Mammary epithelial cell (primary cell): ENCODE measurements at regions of chr12 and their contacts with region 1.

Region 1: DNA sequence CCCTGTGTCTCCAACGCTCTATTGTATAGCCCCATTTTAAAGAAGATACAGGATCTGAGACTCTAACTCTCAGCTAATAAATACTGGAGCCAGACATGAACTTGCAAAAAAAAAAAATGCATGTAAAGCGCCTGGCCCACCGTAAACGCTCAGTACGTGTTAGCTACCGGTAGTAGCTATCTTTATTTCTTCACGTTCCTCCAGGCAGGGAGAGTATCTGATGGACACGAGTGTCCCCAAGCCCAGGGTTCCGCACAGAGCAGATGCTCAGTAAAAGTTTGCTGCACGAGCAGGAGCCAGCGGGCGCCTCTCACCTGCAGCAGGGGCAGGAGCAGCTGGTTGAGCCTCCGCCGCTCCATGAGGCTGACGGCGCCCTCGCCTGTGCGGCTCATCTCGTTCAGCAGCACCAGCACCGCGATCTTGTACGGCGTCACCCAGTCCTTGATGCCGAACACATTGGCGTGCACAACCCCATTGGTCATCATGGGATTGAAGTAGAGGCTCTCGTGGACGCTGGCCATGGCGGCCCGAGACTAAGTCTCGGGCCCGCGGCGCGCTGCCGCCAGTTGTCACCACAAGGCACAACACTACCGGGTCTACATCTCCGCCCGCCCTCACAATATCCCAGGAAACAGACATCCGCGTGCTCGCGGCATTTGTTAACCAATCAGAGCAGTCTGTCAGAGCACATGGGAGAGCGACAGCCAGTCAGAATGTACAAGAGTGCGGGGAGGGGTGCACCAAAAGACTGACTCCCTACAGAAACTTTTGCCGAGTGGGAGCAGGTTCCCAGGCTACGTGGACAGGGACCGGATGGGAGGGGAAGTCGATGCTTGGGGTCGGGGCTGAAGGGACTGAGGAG is at the start of gene ANAPC5:
- DNase-seq: peak; percentile 99
- H3K4me3 ChIP-seq: peak within 1 kb of the TSS; percentile 72 to 98 (median 83)
- H3K27ac ChIP-seq: peak within 1 kb of the TSS; percentile 66
- H3K4me1 ChIP-seq: peaks cover 3% of the 10 kb centered on the region
- H3K27me3 ChIP-seq: no peaks in the 10 kb centered on the region
- CTCF ChIP-seq: peak in 1 of 2 donors; percentile 3
- total RNA-seq, gene ANAPC5: 85.1 to 118 TPM

Region 2: GRCh38 chr12:121399391-121400331 is 47.6 kb after region 1 on chr12 and contains the start of gene RNF34:
- CTCF ChIA-PET with region 1: interaction called, 3 read pairs
- dilution Hi-C with region 1: no loop called
- in situ Hi-C with region 1: no loop called
- intact Hi-C with region 1: loop called (anchors 1 kb)
- DNase-seq: peak; percentile 99
- H3K4me3 ChIP-seq: peak within 1 kb of the TSS; percentile 71 to 86 (median 83)
- H3K27ac ChIP-seq: peak within 1 kb of the TSS; percentile 77
- H3K4me1 ChIP-seq: peaks cover 10% of the 10 kb centered on the region
- H3K27me3 ChIP-seq: no peaks in the 10 kb centered on the region
- CTCF ChIP-seq: no peak
- total RNA-seq, gene RNF34: 49.5 to 56.8 TPM

Region 3: DNA sequence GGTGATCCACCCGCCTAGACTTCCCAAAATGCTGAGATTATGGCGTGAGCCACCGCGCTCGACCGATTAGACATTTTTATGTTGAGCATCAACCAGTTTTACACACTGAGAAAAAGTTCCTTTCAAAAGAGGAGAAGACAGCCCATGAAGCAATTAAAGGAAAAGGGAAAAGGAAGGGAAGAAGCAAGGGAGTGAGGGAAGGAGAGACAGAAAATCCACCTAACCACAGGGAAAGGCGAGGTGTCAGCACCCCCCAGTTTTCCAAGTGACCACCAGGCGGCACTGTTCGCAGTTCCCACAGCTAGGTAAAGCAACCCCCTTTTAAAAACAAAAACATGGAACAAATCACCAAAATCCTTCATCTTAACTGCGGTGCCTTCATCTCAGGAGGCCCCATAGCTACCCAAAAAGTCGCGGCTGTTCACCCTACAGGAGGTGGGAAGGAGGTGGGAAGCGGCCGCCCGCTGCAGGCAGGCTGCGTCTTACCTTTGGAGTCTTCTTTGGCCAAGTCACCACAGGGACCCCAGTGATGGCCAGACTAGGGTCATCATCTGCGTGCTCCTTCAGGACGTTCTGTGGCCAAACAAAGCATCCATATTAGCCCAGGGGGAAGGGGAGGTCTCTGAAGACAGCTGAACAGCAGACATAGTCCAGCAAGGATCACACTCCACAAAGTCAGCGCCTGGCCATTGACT is 142.2 kb after region 1 on chr12:
- CTCF ChIA-PET with region 1: no interaction called
- dilution Hi-C with region 1: no loop called
- in situ Hi-C with region 1: no loop called
- intact Hi-C with region 1: no loop called
- DNase-seq: no peak
- H3K4me3 ChIP-seq: no peak overlapping the region
- H3K27ac ChIP-seq: no peak overlapping the region
- H3K4me1 ChIP-seq: no peaks in the 10 kb centered on the region
- H3K27me3 ChIP-seq: no peaks in the 10 kb centered on the region
- CTCF ChIP-seq: peak; percentile 68 to 80

Region 4: DNA sequence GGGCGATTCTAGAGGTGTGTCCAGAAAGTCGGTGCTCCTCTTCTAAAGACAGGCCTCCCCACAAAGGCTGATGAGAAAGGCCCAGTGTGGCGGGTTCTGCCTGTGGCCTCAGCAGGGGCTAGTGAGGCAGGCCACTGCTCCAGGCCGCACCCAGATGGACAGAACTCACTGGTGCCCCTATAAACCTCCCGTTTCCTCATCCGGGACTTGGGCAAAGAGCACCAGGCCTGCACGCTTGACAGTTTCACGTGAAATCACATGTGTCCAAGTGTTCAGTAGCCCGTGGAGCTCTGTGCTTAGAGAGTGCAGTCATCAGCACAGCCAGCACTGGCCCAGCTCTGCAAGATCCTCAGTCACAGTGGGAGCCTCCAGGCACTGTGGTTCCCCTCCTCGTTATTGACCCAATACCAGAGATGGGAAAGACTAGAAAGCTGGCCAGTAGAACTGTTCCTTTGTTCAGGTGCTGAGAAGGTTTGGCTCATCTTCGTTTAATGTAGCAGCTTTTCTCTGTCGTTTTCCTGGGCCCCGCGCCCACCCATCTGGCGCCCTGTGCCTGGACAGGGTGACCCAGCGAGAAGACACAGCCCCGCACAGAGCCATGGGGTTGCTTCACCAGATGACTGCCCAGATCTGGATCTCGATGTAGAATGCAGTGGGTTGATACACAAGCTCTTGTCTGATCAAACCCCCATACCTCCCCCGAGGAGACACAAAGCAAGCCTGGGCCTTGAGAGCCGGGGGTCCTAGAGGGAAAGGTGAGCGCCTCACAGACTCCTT is 795.7 kb after region 1 on chr12:
- CTCF ChIA-PET with region 1: no interaction called
- dilution Hi-C with region 1: no loop called
- in situ Hi-C with region 1: no loop called
- intact Hi-C with region 1: no loop called
- DNase-seq: no peak
- H3K4me3 ChIP-seq: no peak overlapping the region
- H3K27ac ChIP-seq: no peak overlapping the region
- H3K4me1 ChIP-seq: no peaks in the 10 kb centered on the region
- H3K27me3 ChIP-seq: no peaks in the 10 kb centered on the region
- CTCF ChIP-seq: no peak